Left ventricle myocardium inferior (tissue), 1 donor: ENCODE measurements at regions of chr17 and their contacts with region 1.

Region 1: DNA sequence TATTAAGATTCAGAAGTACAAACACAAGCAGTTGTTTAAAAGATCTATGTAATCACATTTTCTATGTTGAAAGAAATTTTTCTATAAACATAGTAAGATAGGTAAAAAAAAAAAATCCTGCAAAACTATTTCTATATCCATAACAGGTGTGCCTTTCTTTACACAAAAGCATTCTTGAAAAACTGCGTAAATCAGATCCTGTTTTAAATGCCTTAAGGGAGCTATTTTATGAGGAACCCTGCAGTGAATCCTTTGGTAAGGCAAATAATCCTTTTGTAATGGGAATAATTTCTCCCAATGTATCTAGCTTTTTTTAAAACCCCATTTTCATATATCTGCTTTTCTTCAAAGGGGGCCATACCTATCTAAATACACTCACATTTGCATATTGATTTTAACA is 157.3 kb downstream of the AATF start:
- DNase-seq: no peak
- H3K4me3 ChIP-seq: no peak overlapping the region
- H3K27ac ChIP-seq: no peak overlapping the region
- H3K4me1 ChIP-seq: peaks cover 9% of the 10 kb centered on the region
- H3K27me3 ChIP-seq: no peaks in the 10 kb centered on the region
- CTCF ChIP-seq: no peak

Region 2: DNA sequence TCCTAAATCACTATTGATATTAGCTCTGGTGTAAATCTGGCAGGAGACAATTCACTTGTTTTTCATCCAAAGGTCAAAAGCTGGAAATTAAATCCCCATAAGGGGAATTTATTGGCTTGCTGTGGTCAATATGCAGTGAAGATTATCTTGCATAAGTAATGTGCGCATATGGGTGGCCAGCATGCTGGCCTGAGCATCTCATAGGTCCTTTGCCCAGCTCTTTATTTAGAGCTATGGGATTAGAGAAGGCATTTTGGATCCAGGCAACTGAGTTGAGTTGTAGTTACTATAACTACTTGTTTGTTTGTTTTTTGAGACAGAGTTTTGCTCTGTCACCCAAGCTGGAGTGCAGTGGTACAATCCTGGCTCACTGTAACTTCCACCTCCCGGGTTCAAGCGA is 46.6 kb before region 1 on chr17:
- intact Hi-C with region 1: loop called (anchors 1 kb)
- DNase-seq: no peak
- H3K4me3 ChIP-seq: no peak overlapping the region
- H3K27ac ChIP-seq: no peak overlapping the region
- H3K4me1 ChIP-seq: no peaks in the 10 kb centered on the region
- H3K27me3 ChIP-seq: peaks cover 19% of the 10 kb centered on the region
- CTCF ChIP-seq: no peak

Region 3: DNA sequence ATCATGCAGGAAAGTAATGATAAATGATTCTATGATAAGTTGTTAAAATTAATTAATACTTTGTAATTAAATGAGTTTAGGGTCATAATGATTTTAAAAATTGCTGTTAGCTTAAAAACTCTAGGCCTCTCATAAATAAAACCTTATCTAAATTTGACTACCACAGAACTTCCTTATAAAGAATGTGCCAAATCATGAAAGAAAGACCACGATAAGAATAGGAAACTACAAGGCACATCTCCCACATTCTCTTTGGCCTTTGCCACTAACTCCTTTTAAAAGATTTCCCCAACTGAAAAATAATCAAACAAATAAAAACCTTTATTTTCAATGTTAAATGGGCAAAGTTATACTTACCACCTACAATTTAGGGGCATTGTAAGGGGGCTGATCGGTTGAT is 105.1 kb after region 1 on chr17:
- intact Hi-C with region 1: no loop called
- DNase-seq: no peak
- H3K4me3 ChIP-seq: no peak overlapping the region
- H3K27ac ChIP-seq: no peak overlapping the region
- H3K4me1 ChIP-seq: peaks cover 11% of the 10 kb centered on the region
- H3K27me3 ChIP-seq: no peaks in the 10 kb centered on the region
- CTCF ChIP-seq: no peak